ENCODE measurements at regions of chr5 and their contacts with region 1.

Region 1: GRCh38 chr5:91383027-91383955 is at the start of gene ARRDC3:
- DNase-seq: peak; percentile 97 to 98 (median 97)
- ATAC-seq: peak; percentile 67 to 86 (median 76)
- H3K4me3 ChIP-seq: peak within 1 kb of the TSS; percentile 60 to 83 (median 75)
- H3K27ac ChIP-seq: peak within 1 kb of the TSS; percentile 90 to 100 (median 98)
- H3K4me1 ChIP-seq: peaks cover 0 to 26% (median 14%) of the 10 kb centered on the region in 12 donors
- H3K27me3 ChIP-seq: no peaks in the 10 kb centered on the region
- CTCF ChIP-seq: peak in 1 of 12 donors; percentile 14
- POLR2A ChIP-seq: peak; percentile 64 to 97
- total RNA-seq, gene ARRDC3: 4.3 to 53.6 (median 11.8) TPM

Region 2: GRCh38 chr5:90866333-90866732 is 517.0 kb before region 1 on chr5:
- intact Hi-C with region 1: loop called in 6 of 10 experiments (anchors 10 kb)
- DNase-seq: no peak
- ATAC-seq: peak in 2 of 4 donors; percentile 61 to 62
- H3K4me3 ChIP-seq: no peak overlapping the region
- H3K27ac ChIP-seq: no peak overlapping the region
- H3K4me1 ChIP-seq: peaks cover 0 to 17% (median 1%) of the 10 kb centered on the region in 12 donors
- H3K27me3 ChIP-seq: no peaks in the 10 kb centered on the region
- CTCF ChIP-seq: peak; percentile 20 to 68 (median 55)
- POLR2A ChIP-seq: no peak

Region 3: GRCh38 chr5:90878549-90879196 is 504.6 kb before region 1 on chr5:
- intact Hi-C with region 1: loop called in 2 of 10 experiments (anchors 10 kb)
- DNase-seq: peak in 2 of 5 donors; percentile 16 to 26
- ATAC-seq: peak in 3 of 4 donors; percentile 82 to 92 (median 91)
- H3K4me3 ChIP-seq: no peak overlapping the region
- H3K27ac ChIP-seq: peak overlapping the region in 8 of 12 donors; percentile 16 to 72 (median 54)
- H3K4me1 ChIP-seq: peaks cover 0 to 23% (median 4%) of the 10 kb centered on the region in 12 donors
- H3K27me3 ChIP-seq: no peaks in the 10 kb centered on the region
- CTCF ChIP-seq: no peak
- POLR2A ChIP-seq: no peak

Region 4: GRCh38 chr5:90932052-90932699 is 451.1 kb before region 1 on chr5:
- intact Hi-C with region 1: loop called in 9 of 10 experiments (anchors 2 to 10 kb)
- DNase-seq: peak in 2 of 5 donors; percentile 41 to 58
- ATAC-seq: peak in 3 of 4 donors; percentile 61 to 72 (median 69)
- H3K4me3 ChIP-seq: no peak overlapping the region
- H3K27ac ChIP-seq: peak overlapping the region in 1 of 12 donors; percentile 17
- H3K4me1 ChIP-seq: peaks cover 0 to 6% (median 0%) of the 10 kb centered on the region in 12 donors
- H3K27me3 ChIP-seq: no peaks in the 10 kb centered on the region
- CTCF ChIP-seq: peak; percentile 60 to 88 (median 80)
- POLR2A ChIP-seq: no peak

Region 5: DNA sequence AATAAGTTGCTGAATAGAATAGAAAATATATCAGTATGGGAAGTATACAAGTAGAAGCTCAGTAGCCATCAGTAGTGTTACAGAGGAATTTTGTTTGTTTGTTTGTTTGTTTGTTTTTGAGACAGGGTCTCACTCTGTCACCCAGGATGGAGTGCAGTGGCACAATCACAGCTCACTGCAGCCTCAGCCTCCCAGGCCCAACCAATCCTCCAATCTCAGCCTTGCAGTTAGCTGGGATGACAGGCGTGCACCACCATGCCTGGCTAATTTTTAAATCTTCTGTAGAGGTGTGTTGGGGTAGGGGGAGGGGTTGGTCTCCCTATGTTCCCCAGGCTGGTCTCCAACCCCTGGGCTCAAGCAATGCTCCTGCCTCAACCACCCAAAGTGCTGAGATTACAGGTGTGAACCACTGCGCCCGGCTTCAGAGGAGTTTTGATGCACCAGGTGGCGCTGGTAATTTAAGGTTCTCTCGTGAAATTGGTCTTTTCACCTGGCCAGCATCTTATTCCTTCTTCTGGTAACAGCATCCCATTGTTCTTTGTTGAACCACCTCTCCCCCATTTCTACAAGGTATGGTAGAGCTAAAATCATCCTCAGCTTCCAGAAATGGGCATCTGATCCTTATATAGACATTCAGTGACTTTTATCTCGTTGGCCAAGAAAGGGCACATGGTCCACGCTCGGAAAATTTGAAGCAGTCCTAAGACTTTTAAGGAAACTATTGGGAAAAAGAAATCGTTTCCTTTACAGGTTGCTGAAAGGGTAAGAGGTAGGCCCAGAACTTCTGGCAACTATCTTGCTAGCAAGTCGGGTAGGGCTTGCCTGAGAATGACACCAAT is 157.2 kb before region 1 on chr5:
- intact Hi-C with region 1: loop called (anchors 1 to 10 kb)
- DNase-seq: peak in 2 of 5 donors; percentile 26 to 36
- ATAC-seq: peak in 2 of 4 donors; percentile 20 to 59
- H3K4me3 ChIP-seq: no peak overlapping the region
- H3K27ac ChIP-seq: no peak overlapping the region
- H3K4me1 ChIP-seq: peaks cover 0 to 10% (median 0%) of the 10 kb centered on the region in 12 donors
- H3K27me3 ChIP-seq: no peaks in the 10 kb centered on the region
- CTCF ChIP-seq: peak in 11 of 12 donors; percentile 9 to 53 (median 33)
- POLR2A ChIP-seq: no peak

Region 6: GRCh38 chr5:91280362-91281269 is 102.7 kb before region 1 on chr5:
- intact Hi-C with region 1: loop called in 9 of 10 experiments (anchors 1 to 5 kb)
- DNase-seq: peak; percentile 94 to 97 (median 95)
- ATAC-seq: peak; percentile 95 to 98 (median 97)
- H3K4me3 ChIP-seq: peak overlapping the region; percentile 35 to 73 (median 62)
- H3K27ac ChIP-seq: peak overlapping the region; percentile 72 to 97 (median 93)
- H3K4me1 ChIP-seq: peaks cover 0 to 29% (median 8%) of the 10 kb centered on the region in 12 donors
- H3K27me3 ChIP-seq: no peaks in the 10 kb centered on the region
- CTCF ChIP-seq: peak in 2 of 12 donors; percentile 6 to 7
- POLR2A ChIP-seq: peak in 1 of 2 donors; percentile 50

Region 7: DNA sequence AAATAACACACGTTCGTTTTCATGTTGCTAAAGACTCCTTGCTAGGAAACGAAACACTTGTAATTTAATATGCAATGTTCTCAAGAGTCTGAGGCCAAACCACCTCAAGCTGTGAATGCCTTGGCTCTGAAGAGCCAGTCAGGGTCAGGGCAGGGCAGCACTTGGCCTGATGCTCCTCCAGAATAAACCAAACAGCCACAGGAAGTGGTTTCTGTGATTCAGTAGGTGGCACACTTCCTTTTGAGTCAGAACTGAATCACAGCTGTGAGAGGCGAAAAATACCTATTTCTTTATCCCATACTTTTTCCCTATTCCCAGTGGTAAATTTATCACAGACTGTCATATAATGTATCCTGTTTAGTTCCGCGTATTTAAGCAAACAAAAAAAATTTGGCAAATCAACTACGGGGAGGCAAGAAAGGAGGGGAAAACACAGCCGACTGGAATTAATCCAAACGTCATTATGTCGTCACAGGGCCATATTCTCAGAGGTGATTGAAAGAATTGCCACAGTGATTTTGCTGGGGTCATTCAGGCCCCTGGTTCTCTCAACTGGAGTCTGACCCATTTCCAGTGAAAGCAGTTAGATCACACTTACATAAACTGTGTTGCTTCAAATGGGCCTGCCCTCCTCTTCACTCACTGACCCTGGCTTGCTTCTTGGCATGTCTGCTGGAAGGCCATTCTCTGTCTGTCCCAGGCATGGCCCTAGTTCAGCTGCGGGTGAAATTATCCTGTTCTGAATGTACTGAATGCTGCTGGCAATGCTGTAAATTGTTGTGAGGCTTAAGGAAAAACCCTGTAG is 71.4 kb before region 1 on chr5:
- intact Hi-C with region 1: loop called in 4 of 10 experiments (anchors 1 to 5 kb)
- DNase-seq: peak; percentile 55 to 69 (median 68)
- ATAC-seq: peak; percentile 74 to 79 (median 74)
- H3K4me3 ChIP-seq: peak overlapping the region in 1 of 12 donors; percentile 23
- H3K27ac ChIP-seq: peak overlapping the region; percentile 47 to 88 (median 76)
- H3K4me1 ChIP-seq: peaks cover 0 to 61% (median 26%) of the 10 kb centered on the region in 12 donors
- H3K27me3 ChIP-seq: no peaks in the 10 kb centered on the region
- CTCF ChIP-seq: peak in 3 of 12 donors; percentile 16 to 29 (median 20)
- POLR2A ChIP-seq: no peak

Region 8: DNA sequence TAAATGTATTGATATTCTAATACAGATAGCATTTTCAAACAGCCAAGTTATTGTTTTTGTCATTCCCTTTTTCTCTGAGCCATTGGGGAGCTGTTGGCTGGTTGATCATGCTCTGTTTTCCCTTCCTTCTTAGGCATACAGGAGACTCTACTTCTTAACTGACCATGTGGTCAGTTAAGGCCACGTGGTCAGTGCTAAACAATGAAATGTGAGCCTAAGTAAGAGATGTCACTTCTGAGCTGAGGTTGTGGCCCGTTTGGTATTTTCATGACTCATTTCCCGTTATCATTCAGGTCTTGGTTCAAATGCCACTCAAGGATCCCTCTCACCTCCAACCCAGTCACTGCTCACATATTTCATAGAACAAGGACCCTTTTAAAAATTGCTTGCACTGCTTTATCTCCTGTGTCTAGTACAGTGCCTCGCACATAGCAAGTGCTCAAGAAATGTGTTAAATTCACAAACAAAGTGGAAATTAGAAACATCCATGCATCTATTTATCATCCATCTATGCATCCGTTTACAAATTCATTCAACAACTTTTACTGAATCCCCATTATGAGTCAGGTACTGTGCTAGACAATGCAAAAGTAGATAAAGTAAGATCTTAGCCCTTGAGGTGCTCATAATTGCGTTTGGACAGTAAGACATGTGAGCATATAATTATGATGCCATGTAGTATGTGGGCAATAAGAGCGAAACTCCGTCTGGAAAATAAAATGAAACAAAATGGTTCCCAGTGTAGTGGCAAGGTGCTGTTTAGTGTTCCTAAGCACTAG is 50.8 kb before region 1 on chr5:
- intact Hi-C with region 1: no loop called
- DNase-seq: no peak
- ATAC-seq: no peak
- H3K4me3 ChIP-seq: no peak overlapping the region
- H3K27ac ChIP-seq: no peak overlapping the region
- H3K4me1 ChIP-seq: peaks cover 0 to 8% (median 0%) of the 10 kb centered on the region in 12 donors
- H3K27me3 ChIP-seq: no peaks in the 10 kb centered on the region
- CTCF ChIP-seq: no peak
- POLR2A ChIP-seq: no peak

Measured in heart left ventricle (tissue), 16 donors.